OCI-LY7 (cell line): ENCODE measurements at regions of chr3 and their contacts with region 1.

Region 1: DNA sequence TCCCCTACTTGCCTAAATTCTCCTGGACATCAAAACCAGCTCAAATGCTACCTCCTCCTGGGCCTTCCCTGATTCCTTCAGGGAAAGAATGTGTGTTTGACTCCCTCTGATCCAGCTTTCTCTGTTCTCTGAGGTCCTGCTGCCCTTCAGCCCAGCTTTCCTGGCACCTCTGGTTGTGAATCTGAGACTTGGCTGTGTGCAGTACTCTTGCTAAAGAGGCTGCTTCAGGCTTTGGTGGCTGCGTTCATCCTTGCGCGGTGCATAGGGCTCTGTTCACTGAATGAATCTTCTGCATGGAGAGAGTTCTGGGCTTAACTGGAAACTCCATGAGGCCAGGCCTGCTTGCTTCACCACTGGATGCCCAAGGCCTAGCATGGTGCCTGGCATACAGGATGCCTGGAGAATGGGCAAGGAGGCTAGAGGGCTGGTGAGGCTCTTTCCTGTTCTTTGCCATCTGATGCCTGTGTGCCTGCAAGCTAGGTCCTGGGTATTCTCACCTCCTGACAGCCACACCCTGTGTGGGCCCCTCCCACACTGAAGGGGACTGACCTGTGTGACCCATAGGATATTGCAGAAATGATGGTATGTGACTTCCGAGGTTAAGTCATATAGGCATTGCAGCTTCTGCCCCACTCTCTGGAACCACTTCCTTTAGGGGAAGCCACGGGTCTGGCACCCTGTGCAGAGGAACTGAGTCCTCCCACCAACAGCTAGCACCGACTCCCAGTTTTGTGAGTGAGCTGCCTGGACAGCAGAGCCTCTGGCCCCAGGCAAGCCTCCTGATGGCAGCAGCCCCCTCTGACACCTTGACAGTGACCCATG is 24.8 kb upstream of the SLC6A6 start:
- DNase-seq: peak; percentile 76
- H3K4me3 ChIP-seq: no peak overlapping the region
- H3K27ac ChIP-seq: peak overlapping the region; percentile 89
- H3K4me1 ChIP-seq: peaks cover 63% of the 10 kb centered on the region
- CTCF ChIP-seq: no peak

Region 2: GRCh38 chr3:14235003-14235887 is 142.3 kb before region 1 on chr3:
- CTCF ChIA-PET with region 1: no interaction called
- POLR2A ChIA-PET with region 1: no interaction called
- intact Hi-C with region 1: no loop called
- DNase-seq: no peak
- H3K4me3 ChIP-seq: no peak overlapping the region
- H3K27ac ChIP-seq: no peak overlapping the region
- H3K4me1 ChIP-seq: peaks cover 3% of the 10 kb centered on the region
- CTCF ChIP-seq: no peak

Region 3: DNA sequence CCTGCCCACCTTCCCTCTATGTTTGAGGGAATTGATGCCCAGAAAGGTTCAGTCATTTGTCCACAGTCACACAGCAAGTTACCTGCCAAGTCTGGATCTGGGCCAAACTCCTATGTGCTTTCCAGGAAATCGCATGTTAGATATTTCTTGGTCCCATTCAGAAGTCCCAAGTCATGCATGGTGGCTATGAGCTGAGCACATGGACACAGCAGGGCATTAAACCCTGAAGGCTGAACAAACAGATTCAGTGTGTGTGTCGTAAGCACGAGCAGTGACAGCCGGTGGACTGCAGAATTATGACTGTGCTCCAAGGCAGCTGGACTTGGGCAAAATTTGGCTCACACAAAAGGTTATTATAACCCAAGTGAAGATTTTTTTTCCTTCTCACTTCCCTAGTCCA is 13.5 kb after region 1 on chr3:
- CTCF ChIA-PET with region 1: no interaction called
- POLR2A ChIA-PET with region 1: interaction called, 39 read pairs
- intact Hi-C with region 1: no loop called
- DNase-seq: no peak
- H3K4me3 ChIP-seq: no peak overlapping the region
- H3K27ac ChIP-seq: peak overlapping the region; percentile 97
- H3K4me1 ChIP-seq: peaks cover 81% of the 10 kb centered on the region
- CTCF ChIP-seq: no peak

Region 4: DNA sequence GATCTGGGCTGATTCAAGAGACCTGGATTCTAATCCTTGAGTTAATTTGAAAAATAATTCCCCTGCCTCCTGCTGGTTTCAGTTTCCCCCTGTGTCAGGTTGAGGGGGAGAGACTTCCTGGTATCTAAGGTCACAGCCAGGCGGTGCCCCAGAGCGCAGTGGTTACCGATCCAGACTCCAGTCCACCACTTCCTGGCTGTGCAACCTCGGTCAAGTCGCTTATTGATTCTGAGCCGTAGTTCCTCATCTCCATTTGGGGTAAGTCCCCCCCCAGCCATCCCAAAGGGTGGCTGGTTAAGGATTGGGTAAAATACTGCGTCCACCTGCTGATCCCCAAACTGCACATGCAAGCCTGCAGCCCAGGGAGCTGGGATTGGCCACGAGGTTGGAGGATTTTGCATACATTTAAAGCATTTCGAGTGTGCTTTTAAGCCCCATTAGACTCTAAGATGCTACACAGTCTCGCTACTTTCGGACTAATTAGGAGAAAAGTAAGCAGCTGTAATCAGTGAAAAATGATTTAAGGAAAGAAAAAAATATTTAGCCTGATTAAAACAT is 48.6 kb after region 1 on chr3:
- CTCF ChIA-PET with region 1: interaction called, 3 read pairs
- POLR2A ChIA-PET with region 1: interaction called, 5 read pairs
- intact Hi-C with region 1: loop called (anchors 2 kb)
- DNase-seq: peak; percentile 55
- H3K4me3 ChIP-seq: no peak overlapping the region
- H3K27ac ChIP-seq: peak overlapping the region; percentile 90
- H3K4me1 ChIP-seq: peaks cover 87% of the 10 kb centered on the region
- CTCF ChIP-seq: peak; percentile 41; the same call in 1 of the 2 replicates

Region 5: GRCh38 chr3:14555835-14556234 is 178.3 kb after region 1 on chr3:
- CTCF ChIA-PET with region 1: no interaction called
- POLR2A ChIA-PET with region 1: no interaction called
- intact Hi-C with region 1: no loop called
- DNase-seq: no peak
- H3K4me3 ChIP-seq: no peak overlapping the region
- H3K27ac ChIP-seq: no peak overlapping the region
- H3K4me1 ChIP-seq: no peaks in the 10 kb centered on the region
- CTCF ChIP-seq: no peak